ENCODE measurements at regions of chr16 and their contacts with region 1.

Region 1: DNA sequence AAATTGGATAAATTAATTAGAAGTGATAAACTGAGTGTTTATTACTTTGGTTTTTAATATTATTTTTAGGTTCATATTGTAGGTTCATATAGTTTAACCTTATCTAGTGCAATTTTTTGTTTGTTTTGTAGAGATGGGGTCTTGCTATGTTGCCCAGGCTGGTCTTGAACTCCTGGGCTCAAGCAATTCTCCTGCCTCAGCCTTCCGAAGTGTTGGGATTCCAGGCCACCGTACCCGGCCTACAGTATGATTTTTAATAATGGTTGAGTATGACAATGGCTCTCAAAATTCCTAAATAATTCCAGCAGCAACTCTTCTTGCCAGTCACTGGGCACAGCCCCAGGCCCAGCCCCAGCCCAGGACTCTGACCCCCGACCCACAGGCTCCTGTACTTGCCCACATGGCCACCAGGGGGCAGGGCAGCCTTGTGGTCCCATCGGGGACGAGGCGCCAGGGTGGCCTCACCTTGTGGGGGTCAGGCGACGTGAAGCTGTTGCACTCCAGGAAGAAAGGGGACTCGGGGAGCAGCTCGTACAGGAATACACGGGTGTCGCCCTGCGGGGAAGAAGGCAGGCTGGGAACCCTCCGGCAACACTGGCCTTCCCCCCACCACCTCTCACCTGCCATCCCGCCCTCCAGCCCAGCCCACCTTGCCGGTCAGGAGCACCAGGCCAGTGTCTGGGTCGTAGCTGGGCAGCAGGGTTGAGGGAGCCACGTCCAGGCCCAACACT is 7.9 kb upstream of the PAM16 start:
- DNase-seq: peak; percentile 76 to 82
- H3K4me3 ChIP-seq: no peak overlapping the region
- H3K27ac ChIP-seq: no peak overlapping the region
- H3K4me1 ChIP-seq: peaks cover 0 to 7% (median 3%) of the 10 kb centered on the region in 4 donors
- H3K27me3 ChIP-seq: no peaks in the 10 kb centered on the region
- CTCF ChIP-seq: peak in 6 of 7 experiments; percentile 82 to 99 (median 97)
- EP300 ChIP-seq: no peak
- POLR2A ChIP-seq: no peak

Region 2: GRCh38 chr16:4402439-4403132 is 43.6 kb after region 1 on chr16:
- intact Hi-C with region 1: loop called (anchors 5 kb)
- DNase-seq: peak; percentile 87 to 94
- H3K4me3 ChIP-seq: no peak overlapping the region
- H3K27ac ChIP-seq: no peak overlapping the region
- H3K4me1 ChIP-seq: peaks cover 0 to 11% (median 5%) of the 10 kb centered on the region in 4 donors
- H3K27me3 ChIP-seq: no peaks in the 10 kb centered on the region
- CTCF ChIP-seq: peak in 6 of 7 experiments; percentile 71 to 96 (median 91)
- EP300 ChIP-seq: no peak
- POLR2A ChIP-seq: no peak